ENCODE measurements at regions of chr14 and their contacts with region 1.

Region 1: DNA sequence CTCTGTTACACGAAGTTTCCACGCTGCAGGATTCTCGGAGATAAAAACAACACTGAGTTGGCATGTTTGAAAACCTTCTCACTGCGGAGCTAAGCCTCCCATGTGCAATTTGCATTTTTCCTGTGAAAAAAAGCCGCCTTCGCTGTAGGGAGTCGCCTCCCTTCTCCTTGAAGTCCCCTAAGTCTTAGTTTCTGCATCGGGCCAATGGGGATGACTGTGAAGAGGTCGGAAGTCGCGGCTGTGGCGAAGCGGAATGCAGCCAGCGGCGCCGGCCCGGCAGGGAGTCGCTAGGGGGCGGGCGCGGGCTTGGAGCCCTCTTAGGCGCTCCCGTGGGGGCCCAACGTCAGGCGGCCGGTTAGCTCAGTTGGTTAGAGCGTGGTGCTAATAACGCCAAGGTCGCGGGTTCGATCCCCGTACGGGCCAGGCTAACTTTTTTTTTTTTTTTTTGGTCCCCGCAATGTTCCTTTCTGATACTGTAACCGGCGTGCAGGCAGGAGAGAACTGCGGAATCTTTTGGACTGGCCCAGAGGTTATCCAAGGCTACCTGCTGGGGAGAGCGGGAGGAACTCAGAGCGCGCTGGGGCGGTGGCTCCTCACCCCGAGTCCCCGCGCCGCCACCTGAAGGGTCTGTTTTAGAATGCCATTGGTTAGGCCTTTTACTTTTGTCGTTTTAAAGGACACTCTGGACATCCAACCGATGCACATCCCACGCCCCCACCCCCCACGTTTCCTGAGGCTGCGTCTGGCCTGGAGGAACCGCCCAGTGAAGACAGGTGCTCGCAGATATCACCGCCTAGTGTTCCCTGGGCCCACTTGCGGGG is 2.6 kb upstream of the ZNF839 start:
- DNase-seq: peak; percentile 95
- ATAC-seq: peak; percentile 73
- H3K4me3 Mint-ChIP-seq: peak overlapping the region; percentile 87
- H3K27ac Mint-ChIP-seq: peak overlapping the region; percentile 88
- H3K4me1 Mint-ChIP-seq: peaks cover 58% of the 10 kb centered on the region
- H3K27me3 Mint-ChIP-seq: no peaks in the 10 kb centered on the region

Region 2: GRCh38 chr14:101964297-101965144 is 352.4 kb before region 1 on chr14 and contains the start of gene DYNC1H1:
- CTCF ChIA-PET with region 1: interaction called, 17 read pairs
- POLR2A ChIA-PET with region 1: no interaction called
- DNase-seq: peak; percentile 90
- ATAC-seq: peak; percentile 86
- H3K4me3 Mint-ChIP-seq: peak within 1 kb of the TSS; percentile 94
- H3K27ac Mint-ChIP-seq: peak within 1 kb of the TSS; percentile 94
- H3K4me1 Mint-ChIP-seq: peaks cover 44% of the 10 kb centered on the region
- H3K27me3 Mint-ChIP-seq: peaks cover 3% of the 10 kb centered on the region
- total RNA-seq, gene DYNC1H1: 271 to 274 TPM

Region 3: GRCh38 chr14:102096214-102097114 is 220.5 kb before region 1 on chr14:
- CTCF ChIA-PET with region 1: interaction called, 19 read pairs
- POLR2A ChIA-PET with region 1: no interaction called
- DNase-seq: peak; percentile 74
- ATAC-seq: peak; percentile 82
- H3K4me3 Mint-ChIP-seq: no peak overlapping the region
- H3K27ac Mint-ChIP-seq: no peak overlapping the region
- H3K4me1 Mint-ChIP-seq: peaks cover 9% of the 10 kb centered on the region
- H3K27me3 Mint-ChIP-seq: no peaks in the 10 kb centered on the region

Region 4: GRCh38 chr14:102236026-102236425 is 80.9 kb before region 1 on chr14:
- CTCF ChIA-PET with region 1: interaction called, 10 read pairs
- POLR2A ChIA-PET with region 1: no interaction called
- DNase-seq: no peak
- ATAC-seq: no peak
- H3K4me3 Mint-ChIP-seq: no peak overlapping the region
- H3K27ac Mint-ChIP-seq: no peak overlapping the region
- H3K4me1 Mint-ChIP-seq: no peaks in the 10 kb centered on the region
- H3K27me3 Mint-ChIP-seq: no peaks in the 10 kb centered on the region

Region 5: GRCh38 chr14:102304611-102305509 is 12.1 kb before region 1 on chr14 and contains the start of gene MOK:
- CTCF ChIA-PET with region 1: interaction called, 36 read pairs
- POLR2A ChIA-PET with region 1: interaction called, 4 read pairs
- DNase-seq: peak; percentile 98
- ATAC-seq: peak; percentile 92
- H3K4me3 Mint-ChIP-seq: peak within 1 kb of the TSS; percentile 95
- H3K27ac Mint-ChIP-seq: peak within 1 kb of the TSS; percentile 85
- H3K4me1 Mint-ChIP-seq: peaks cover 11% of the 10 kb centered on the region
- H3K27me3 Mint-ChIP-seq: peaks cover 12% of the 10 kb centered on the region
- total RNA-seq, gene MOK: 3.3 to 4.1 TPM

Region 6: DNA sequence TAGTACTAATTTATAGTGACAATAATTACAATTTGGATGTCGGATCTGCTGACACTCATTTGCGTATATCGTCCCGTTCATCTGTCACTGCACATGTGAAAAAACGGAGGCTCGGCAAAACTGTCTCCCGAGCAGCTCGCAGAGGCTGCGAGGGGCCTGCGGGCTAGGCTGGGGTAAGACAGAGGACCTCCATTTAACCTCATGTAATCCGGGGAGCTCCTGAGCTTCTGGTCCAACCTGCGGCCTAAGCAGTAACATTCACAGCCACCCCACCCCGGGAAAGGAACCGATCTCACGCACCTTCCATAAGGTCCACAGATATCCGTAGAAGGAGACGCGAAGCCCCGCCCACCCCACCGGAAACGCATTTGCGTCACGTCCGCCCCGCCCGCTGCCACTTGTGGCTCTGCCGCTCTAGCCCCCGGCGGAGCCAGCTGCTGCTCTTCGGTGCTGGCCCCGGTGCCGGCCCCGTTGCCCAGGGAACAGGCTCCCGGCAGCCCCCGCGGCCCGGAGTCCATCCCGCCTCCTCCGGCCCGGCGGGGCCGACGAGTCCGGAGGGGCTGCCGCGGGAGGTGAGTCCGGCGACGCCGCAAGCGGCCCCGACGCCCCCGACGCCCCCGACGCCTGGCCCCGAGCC is 45.7 kb after region 1 on chr14 and contains the starts of genes CINP and TECPR2:
- CTCF ChIA-PET with region 1: interaction called, 3 read pairs
- POLR2A ChIA-PET with region 1: interaction called, 19 read pairs
- DNase-seq: peak; percentile 98
- ATAC-seq: peak; percentile 89
- H3K4me3 Mint-ChIP-seq: peak within 1 kb of the TSS; percentile 93
- H3K27ac Mint-ChIP-seq: peak within 1 kb of the TSS; percentile 94
- H3K4me1 Mint-ChIP-seq: peaks cover 35% of the 10 kb centered on the region
- H3K27me3 Mint-ChIP-seq: no peaks in the 10 kb centered on the region
- total RNA-seq, gene CINP: 31.1 to 33.4 TPM
- total RNA-seq, gene TECPR2: 8.0 to 9.4 TPM

Region 7: GRCh38 chr14:102516531-102517415 is 199.8 kb after region 1 on chr14:
- CTCF ChIA-PET with region 1: interaction called, 10 read pairs
- POLR2A ChIA-PET with region 1: no interaction called
- DNase-seq: peak; percentile 68
- ATAC-seq: peak; percentile 89
- H3K4me3 Mint-ChIP-seq: peak overlapping the region; percentile 71
- H3K27ac Mint-ChIP-seq: peak overlapping the region; percentile 74
- H3K4me1 Mint-ChIP-seq: peaks cover 7% of the 10 kb centered on the region
- H3K27me3 Mint-ChIP-seq: peaks cover 20% of the 10 kb centered on the region

Measured in activated CD8-positive, alpha-beta T cell treated with anti-CD3 and anti-CD28 coated beads, Interleukin-2, amount 10 ng/mL, durations not matched to agents 7 days and 5 days (primary cell).